Activated CD4-positive, alpha-beta memory T cell treated with anti-CD3 and anti-CD28 coated beads for 36 hours (primary cell): ENCODE measurements at regions of chr3 and their contacts with region 1.

Region 1: GRCh38 chr3:157618075-157618760 is 115.0 kb upstream of the VEPH1 start:
- DNase-seq: no peak
- H3K4me3 Mint-ChIP-seq: no peak overlapping the region
- H3K27ac Mint-ChIP-seq: no peak overlapping the region
- H3K4me1 Mint-ChIP-seq: peaks cover 4% of the 10 kb centered on the region
- H3K27me3 Mint-ChIP-seq: peaks cover 4% of the 10 kb centered on the region

Region 2: GRCh38 chr3:157606011-157606851 is 12.0 kb before region 1 on chr3:
- CTCF ChIA-PET with region 1: interaction called, 20 read pairs
- POLR2A ChIA-PET with region 1: interaction called, 4 read pairs
- intact Hi-C with region 1: no loop called
- DNase-seq: peak; percentile 71
- H3K4me3 Mint-ChIP-seq: no peak overlapping the region
- H3K27ac Mint-ChIP-seq: no peak overlapping the region
- H3K4me1 Mint-ChIP-seq: peaks cover 3% of the 10 kb centered on the region
- H3K27me3 Mint-ChIP-seq: peaks cover 5% of the 10 kb centered on the region

Region 3: DNA sequence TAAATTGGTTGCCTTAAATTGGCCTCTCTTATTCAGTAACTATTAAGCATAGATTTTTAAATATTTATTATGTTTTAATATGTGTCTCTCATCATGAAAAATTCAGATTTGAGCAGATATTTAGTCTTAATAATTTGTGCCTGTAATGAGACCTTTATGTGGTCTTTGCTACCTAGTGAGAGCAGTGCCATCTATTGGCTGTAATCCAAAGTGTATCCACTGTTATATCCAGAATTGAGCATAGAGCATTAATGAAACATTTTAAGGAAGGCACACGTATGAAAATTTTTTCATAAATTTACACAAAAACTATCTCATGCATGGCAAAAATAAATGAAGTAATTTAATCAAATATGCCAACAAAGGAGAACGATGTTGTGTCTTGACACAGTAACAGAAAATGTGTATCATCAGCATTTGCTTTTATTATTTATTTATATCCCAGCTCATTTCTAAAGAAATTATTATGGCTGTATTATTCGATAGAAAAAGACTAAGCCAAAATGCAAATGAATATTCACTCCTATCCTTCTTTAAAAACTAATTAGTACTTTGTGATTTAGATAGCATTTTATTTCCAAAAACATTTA is 695.2 kb after region 1 on chr3:
- CTCF ChIA-PET with region 1: no interaction called
- POLR2A ChIA-PET with region 1: no interaction called
- intact Hi-C with region 1: loop called (anchors 2 kb)
- DNase-seq: no peak
- H3K4me3 Mint-ChIP-seq: no peak overlapping the region
- H3K27ac Mint-ChIP-seq: no peak overlapping the region
- H3K4me1 Mint-ChIP-seq: no peaks in the 10 kb centered on the region
- H3K27me3 Mint-ChIP-seq: no peaks in the 10 kb centered on the region

Region 4: DNA sequence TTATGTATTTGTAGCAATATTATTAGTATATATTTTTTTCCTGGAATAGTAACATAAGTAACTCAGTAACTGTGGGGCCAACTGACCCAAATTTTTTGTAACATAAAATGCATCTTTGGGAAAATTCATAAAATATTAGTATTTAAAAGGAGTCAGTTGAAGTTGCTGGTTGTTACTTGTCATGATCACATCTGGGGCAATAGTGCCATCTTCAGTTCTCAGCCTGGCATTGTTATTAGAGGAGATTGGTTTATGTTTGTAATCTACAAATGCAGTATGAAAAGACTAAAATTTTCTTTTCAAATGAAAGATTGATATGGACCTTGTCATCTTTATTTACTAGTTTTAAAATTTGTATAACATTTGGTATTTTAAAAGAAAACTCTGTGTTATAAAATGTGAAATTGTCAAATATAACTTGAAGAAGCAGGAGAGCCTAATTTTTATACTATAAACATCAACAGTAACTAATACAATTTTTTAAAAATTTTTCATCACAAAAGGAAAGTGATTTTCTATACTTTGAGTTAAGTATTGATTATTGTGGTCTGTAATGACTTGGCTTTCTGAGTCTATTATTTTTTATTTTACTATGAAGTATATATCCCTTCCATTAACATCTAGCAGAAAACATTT is 914.0 kb after region 1 on chr3:
- CTCF ChIA-PET with region 1: no interaction called
- POLR2A ChIA-PET with region 1: no interaction called
- intact Hi-C with region 1: loop called (anchors 2 kb)
- DNase-seq: no peak
- H3K4me3 Mint-ChIP-seq: no peak overlapping the region
- H3K27ac Mint-ChIP-seq: no peak overlapping the region
- H3K4me1 Mint-ChIP-seq: no peaks in the 10 kb centered on the region
- H3K27me3 Mint-ChIP-seq: no peaks in the 10 kb centered on the region

Region 5: DNA sequence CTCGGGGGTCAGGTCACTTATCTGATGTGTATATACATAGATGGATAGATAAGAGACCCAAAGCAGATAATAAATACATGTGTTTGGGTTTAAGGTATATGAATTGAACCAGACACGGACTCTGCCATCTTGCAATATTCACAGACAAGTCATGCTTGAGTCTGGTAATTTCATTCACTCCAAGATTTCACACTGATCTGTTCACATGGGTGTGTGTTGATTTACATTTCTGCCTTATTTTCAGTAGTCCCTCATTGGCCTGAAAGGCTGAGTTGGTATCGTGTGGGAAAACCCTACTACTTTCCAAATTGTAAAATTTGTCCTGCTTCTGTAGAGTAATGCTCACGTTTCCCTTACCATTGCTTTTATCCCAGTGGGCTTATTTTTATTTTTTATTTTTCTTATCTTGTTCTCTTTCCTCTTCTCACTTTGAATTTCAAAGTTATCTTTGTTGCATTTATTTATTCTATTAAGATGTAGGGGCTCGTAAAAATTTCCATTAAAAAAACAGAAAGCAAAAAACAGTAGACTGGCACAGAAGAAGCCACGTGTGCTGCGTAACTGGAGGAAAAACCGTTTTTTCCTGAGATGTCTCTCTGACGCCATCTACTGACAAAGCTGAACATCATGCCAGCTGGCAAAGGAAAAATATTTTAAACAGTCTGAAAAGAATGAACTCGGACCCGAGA is 1172.8 kb after region 1 on chr3:
- CTCF ChIA-PET with region 1: no interaction called
- POLR2A ChIA-PET with region 1: no interaction called
- intact Hi-C with region 1: loop called (anchors 2 kb)
- DNase-seq: peak; percentile 23
- H3K4me3 Mint-ChIP-seq: peak overlapping the region; percentile 61
- H3K27ac Mint-ChIP-seq: no peak overlapping the region
- H3K4me1 Mint-ChIP-seq: peaks cover 3% of the 10 kb centered on the region
- H3K27me3 Mint-ChIP-seq: no peaks in the 10 kb centered on the region